H1 (cell line): ENCODE measurements at regions of chr15 and their contacts with region 1.

Region 1: DNA sequence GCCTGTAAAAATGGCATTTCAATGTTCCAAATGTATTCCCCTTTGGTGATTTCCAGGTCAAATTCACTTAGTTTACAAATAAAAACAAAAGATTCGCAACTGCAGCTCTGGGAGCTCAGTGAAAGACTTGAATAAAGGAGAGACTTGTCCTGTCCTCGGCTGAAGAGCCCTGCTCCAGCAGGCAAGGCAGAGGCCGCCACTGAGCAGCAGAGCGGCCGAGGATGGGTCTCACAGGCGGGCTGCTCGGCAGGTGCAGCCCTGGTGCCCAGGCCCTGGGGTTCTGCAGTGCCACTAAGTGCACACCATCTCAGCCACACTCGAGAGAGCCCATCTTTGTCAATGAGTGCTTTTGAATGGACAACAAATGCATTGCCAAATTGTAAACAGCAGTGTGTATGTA is 856.2 kb downstream of the AGBL1 start:
- DNase-seq: no peak
- H3K4me3 ChIP-seq: no peak overlapping the region
- H3K27ac ChIP-seq: no peak overlapping the region
- H3K4me1 ChIP-seq: no peaks in the 10 kb centered on the region; a peak in 1 of 7 replicates
- H3K27me3 ChIP-seq: no peaks in the 10 kb centered on the region
- CTCF ChIP-seq: peak; percentile 34 to 59 (median 59)
- EP300 ChIP-seq: no peak
- POLR2A ChIP-seq: no peak
- RAD21 ChIP-seq: peak; percentile 20 to 51; a peak in 2 of 4 replicates

Region 2: GRCh38 chr15:86915811-86916331 is 20.0 kb before region 1 on chr15:
- CTCF ChIA-PET with region 1: interaction called, 10 read pairs
- POLR2A ChIA-PET with region 1: no interaction called
- DNase-seq: no peak
- H3K4me3 ChIP-seq: no peak overlapping the region
- H3K27ac ChIP-seq: no peak overlapping the region
- H3K4me1 ChIP-seq: peaks cover 0 to 15% (median 7%) of the 10 kb centered on the region in 4 experiments; a peak in 5 of 7 replicates
- H3K27me3 ChIP-seq: no peaks in the 10 kb centered on the region; a peak in 1 of 7 replicates
- CTCF ChIP-seq: peak in 2 of 3 experiments; percentile 53 to 65; a peak in 3 of 4 replicates
- EP300 ChIP-seq: no peak
- POLR2A ChIP-seq: no peak
- RAD21 ChIP-seq: peak; percentile 73 to 82